ENCODE measurements at regions of chr5 and their contacts with region 1.

Region 1: DNA sequence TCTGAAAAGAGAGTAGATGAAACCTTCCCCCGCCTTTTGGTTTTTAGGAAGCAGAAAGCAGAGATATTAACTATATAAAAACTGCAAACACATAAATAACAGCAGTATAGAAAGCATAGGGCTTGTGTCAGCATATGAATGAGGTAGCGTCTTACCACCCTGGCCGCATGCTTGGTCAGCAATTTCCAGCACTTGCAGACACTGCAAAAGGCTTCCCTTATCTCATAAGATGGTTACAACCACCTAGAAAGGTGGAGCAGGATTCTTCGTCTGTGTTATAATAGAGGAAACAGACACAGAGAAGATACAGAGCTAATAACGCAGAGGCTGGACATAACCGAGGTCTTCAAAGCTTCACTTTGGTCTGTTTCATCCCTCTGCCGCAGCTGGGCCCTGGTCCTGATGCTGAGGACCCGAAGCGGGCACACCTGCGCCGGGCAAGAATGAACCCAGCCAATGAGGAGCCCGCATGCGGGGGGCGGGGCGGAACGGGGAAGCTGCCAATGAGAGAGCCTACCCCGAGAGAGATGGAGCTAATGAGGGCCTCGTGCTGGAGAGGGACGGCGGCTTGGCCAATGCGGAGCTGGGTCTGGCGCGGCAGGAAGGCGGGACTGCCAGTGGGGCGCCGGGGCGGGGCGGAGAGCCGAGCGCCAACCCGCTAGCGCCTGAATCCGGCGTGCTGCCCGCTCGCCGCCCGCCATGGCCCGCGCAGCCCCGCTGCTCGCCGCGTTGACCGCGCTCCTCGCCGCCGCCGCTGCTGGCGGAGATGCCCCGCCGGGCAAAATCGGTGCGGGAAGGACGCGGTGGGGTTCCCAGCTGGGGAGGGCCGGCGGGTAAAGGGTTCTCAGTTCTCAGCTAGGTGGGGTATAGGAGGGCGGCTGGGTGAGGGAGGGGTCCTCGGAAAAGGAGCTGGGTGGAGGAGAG is at the start of gene PCYOX1L:
- DNase-seq: peak; percentile 88 to 96 (median 93)
- H3K4me3 ChIP-seq: peak within 1 kb of the TSS; percentile 81
- H3K4me3 Mint-ChIP-seq: peak within 1 kb of the TSS; percentile 89 to 97 (median 92)
- H3K27ac ChIP-seq: peak within 1 kb of the TSS; percentile 66
- H3K27ac Mint-ChIP-seq: peak within 1 kb of the TSS; percentile 75 to 96 (median 90)
- H3K4me1 ChIP-seq: peaks cover 47% of the 10 kb centered on the region
- H3K4me1 Mint-ChIP-seq: peaks cover 47 to 67% (median 66%) of the 10 kb centered on the region in 3 donors
- H3K27me3 ChIP-seq: no peaks in the 10 kb centered on the region
- H3K27me3 Mint-ChIP-seq: peaks cover 0 to 2% of the 10 kb centered on the region in 2 donors
- total RNA-seq, gene PCYOX1L: 22.6 to 23.3 TPM

Region 2: DNA sequence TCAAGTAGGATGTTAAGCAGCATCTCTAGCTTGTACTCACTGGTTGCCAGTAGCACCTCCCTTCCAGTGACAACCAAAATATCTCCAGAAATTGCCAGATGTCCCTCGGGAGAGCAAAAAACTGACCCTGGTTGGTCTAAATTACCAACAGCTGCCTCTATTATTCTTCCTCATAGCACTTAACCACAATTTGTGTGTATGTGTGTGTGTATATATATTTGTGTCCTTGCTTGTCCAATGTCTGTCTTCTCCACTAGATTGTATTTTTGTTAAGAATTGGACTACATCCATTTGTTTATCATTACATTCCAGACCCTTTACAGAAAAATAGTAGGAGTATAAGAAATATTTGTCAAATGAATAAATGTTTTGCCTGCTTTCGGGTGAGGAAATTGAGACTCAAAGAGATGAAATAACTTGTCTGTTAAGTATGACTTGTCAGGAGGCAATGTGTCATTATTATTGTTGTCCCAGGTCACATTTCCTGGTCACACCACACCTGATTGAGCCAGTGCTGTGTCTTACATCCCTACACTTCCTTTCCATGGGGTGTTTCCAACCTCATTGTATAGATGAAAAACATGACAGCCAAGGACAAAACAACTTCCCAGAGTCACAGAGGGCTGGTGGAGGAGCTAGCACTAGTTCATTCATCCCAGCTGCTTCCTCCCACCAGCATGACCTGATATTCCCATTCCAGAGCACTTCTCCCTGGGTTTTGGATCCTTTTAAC is 23.8 kb before region 1 on chr5:
- CTCF ChIA-PET with region 1: no interaction called
- POLR2A ChIA-PET with region 1: no interaction called
- DNase-seq: no peak
- H3K4me3 ChIP-seq: no peak overlapping the region
- H3K4me3 Mint-ChIP-seq: no peak overlapping the region
- H3K27ac ChIP-seq: no peak overlapping the region
- H3K27ac Mint-ChIP-seq: no peak overlapping the region
- H3K4me1 ChIP-seq: no peaks in the 10 kb centered on the region
- H3K4me1 Mint-ChIP-seq: no peaks in the 10 kb centered on the region
- H3K27me3 ChIP-seq: no peaks in the 10 kb centered on the region
- H3K27me3 Mint-ChIP-seq: peaks cover 3 to 10% of the 10 kb centered on the region in 2 donors

Region 3: GRCh38 chr5:149345147-149345875 is 12.3 kb before region 1 on chr5 and contains the start of gene GRPEL2:
- CTCF ChIA-PET with region 1: interaction called, 11 read pairs
- POLR2A ChIA-PET with region 1: interaction called, 39 read pairs
- DNase-seq: peak; percentile 73 to 90 (median 81)
- H3K4me3 ChIP-seq: peak within 1 kb of the TSS; percentile 96
- H3K4me3 Mint-ChIP-seq: peak within 1 kb of the TSS; percentile 81 to 95 (median 95)
- H3K27ac ChIP-seq: peak within 1 kb of the TSS; percentile 78
- H3K27ac Mint-ChIP-seq: peak within 1 kb of the TSS; percentile 72 to 93 (median 90)
- H3K4me1 ChIP-seq: peaks cover 52% of the 10 kb centered on the region
- H3K4me1 Mint-ChIP-seq: peaks cover 49 to 62% (median 60%) of the 10 kb centered on the region in 3 donors
- H3K27me3 ChIP-seq: no peaks in the 10 kb centered on the region
- H3K27me3 Mint-ChIP-seq: no peaks in the 10 kb centered on the region
- total RNA-seq, gene GRPEL2: 33.4 to 36.5 TPM

Region 4: GRCh38 chr5:149392718-149393117 is 35.1 kb after region 1 on chr5:
- CTCF ChIA-PET with region 1: no interaction called
- POLR2A ChIA-PET with region 1: no interaction called
- DNase-seq: no peak
- H3K4me3 ChIP-seq: no peak overlapping the region
- H3K4me3 Mint-ChIP-seq: no peak overlapping the region
- H3K27ac ChIP-seq: no peak overlapping the region
- H3K27ac Mint-ChIP-seq: no peak overlapping the region
- H3K4me1 ChIP-seq: no peaks in the 10 kb centered on the region
- H3K4me1 Mint-ChIP-seq: no peaks in the 10 kb centered on the region
- H3K27me3 ChIP-seq: no peaks in the 10 kb centered on the region
- H3K27me3 Mint-ChIP-seq: peaks cover 4 to 8% of the 10 kb centered on the region in 2 donors

Measured in CD8-positive, alpha-beta memory T cell (primary cell).